Naive thymus-derived CD4-positive, alpha-beta T cell (primary cell): ENCODE measurements at regions of chr9 and their contacts with region 1.

Region 1: GRCh38 chr9:78035383-78035993 is 3.9 kb upstream of the GNAQ start:
- DNase-seq: peak in 7 of 9 donors; percentile 53 to 76 (median 72)
- ATAC-seq: peak; percentile 36
- H3K4me3 ChIP-seq: no peak overlapping the region
- H3K4me3 Mint-ChIP-seq: peak overlapping the region in 6 of 10 donors; percentile 3 to 41 (median 24)
- H3K27ac ChIP-seq: no peak overlapping the region
- H3K27ac Mint-ChIP-seq: peak overlapping the region in 7 of 9 donors; percentile 2 to 84 (median 36)
- H3K4me1 ChIP-seq: peaks cover 0 to 20% of the 10 kb centered on the region in 2 donors
- H3K4me1 Mint-ChIP-seq: peaks cover 19 to 35% (median 34%) of the 10 kb centered on the region in 7 donors
- H3K27me3 ChIP-seq: no peaks in the 10 kb centered on the region
- H3K27me3 Mint-ChIP-seq: peaks cover 0 to 4% (median 0%) of the 10 kb centered on the region in 5 donors

Region 2: DNA sequence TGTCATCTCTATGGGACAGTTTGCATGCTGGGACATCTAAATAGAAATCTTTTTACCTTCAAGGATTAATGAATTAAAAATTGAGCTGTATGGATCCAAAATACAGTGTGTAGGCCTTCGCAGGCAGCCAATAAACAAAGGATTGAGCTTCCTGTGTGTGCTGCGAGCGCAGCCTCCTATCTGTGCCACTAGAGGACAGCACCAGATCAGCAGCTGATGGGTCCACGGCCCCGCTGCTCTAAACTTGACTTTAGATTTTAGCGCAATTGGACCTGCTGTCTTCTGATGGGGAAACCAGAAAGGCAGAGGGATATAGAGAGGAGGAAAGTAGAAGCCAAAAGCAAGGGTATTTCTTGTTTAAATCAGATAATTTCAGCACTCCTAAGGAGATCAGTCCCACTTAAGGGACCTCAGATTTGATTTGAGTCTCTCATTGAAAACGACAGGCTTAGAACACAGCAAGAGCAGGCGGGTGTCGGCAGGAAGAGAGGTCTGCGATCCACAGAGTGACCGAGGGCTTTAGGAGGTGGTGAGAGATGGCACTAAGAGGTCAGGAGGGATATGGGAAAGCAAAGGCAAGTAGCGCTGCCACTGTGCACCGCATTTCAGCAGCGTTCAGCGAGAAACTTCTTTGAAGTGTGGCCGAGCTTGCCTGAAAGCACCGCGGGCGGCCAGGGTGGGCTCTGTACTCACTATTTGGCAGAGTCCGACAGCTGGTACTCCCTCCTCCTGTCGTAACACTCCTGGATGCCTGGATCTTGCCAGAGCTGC is 601.6 kb before region 1 on chr9:
- CTCF ChIA-PET with region 1: no interaction called
- POLR2A ChIA-PET with region 1: no interaction called
- intact Hi-C with region 1: loop called (anchors 1 kb)
- DNase-seq: peak; percentile 24 to 62 (median 46)
- ATAC-seq: peak; percentile 90
- H3K4me3 ChIP-seq: no peak overlapping the region
- H3K4me3 Mint-ChIP-seq: peak overlapping the region in 3 of 10 donors; percentile 9 to 70 (median 29)
- H3K27ac ChIP-seq: no peak overlapping the region
- H3K27ac Mint-ChIP-seq: no peak overlapping the region
- H3K4me1 ChIP-seq: no peaks in the 10 kb centered on the region
- H3K4me1 Mint-ChIP-seq: peaks cover 4 to 6% (median 4%) of the 10 kb centered on the region in 7 donors
- H3K27me3 ChIP-seq: no peaks in the 10 kb centered on the region
- H3K27me3 Mint-ChIP-seq: peaks cover 0 to 8% (median 0%) of the 10 kb centered on the region in 5 donors

Region 3: GRCh38 chr9:77751341-77752091 is 284.0 kb before region 1 on chr9:
- CTCF ChIA-PET with region 1: no interaction called
- POLR2A ChIA-PET with region 1: no interaction called
- intact Hi-C with region 1: loop called (anchors 1 to 5 kb)
- DNase-seq: peak in 6 of 9 donors; percentile 4 to 28 (median 22)
- ATAC-seq: peak; percentile 57
- H3K4me3 ChIP-seq: no peak overlapping the region
- H3K4me3 Mint-ChIP-seq: no peak overlapping the region
- H3K27ac ChIP-seq: no peak overlapping the region
- H3K27ac Mint-ChIP-seq: peak overlapping the region in 5 of 9 donors; percentile 4 to 86 (median 29)
- H3K4me1 ChIP-seq: no peaks in the 10 kb centered on the region
- H3K4me1 Mint-ChIP-seq: peaks cover 15 to 34% (median 28%) of the 10 kb centered on the region in 7 donors
- H3K27me3 ChIP-seq: no peaks in the 10 kb centered on the region
- H3K27me3 Mint-ChIP-seq: no peaks in the 10 kb centered on the region

Region 4: DNA sequence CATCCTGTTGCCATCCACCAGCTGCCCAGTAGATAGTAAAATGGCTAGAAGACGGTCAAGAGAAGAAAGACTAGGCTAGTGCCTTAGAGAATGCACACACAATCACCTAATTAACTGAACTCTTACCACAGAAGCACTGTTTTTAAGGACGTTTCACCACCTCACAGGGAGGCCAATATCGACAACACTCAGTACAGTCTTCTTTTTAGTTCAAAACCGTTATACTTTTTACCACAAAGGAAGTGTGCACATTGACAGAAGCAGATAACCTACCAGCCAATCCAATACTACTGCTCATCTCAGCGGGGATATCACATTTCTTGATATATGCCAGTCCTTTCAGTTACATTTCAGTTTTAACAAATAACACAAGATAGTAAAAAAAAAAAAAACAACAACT is 126.2 kb before region 1 on chr9:
- CTCF ChIA-PET with region 1: interaction called, 4 read pairs
- POLR2A ChIA-PET with region 1: no interaction called
- intact Hi-C with region 1: loop called in 1 of 2 experiments (anchors 2 kb)
- DNase-seq: peak in 7 of 9 donors; percentile 45 to 80 (median 63)
- ATAC-seq: peak; percentile 98
- H3K4me3 ChIP-seq: peak overlapping the region; percentile 27
- H3K4me3 Mint-ChIP-seq: peak overlapping the region; percentile 58 to 87 (median 78)
- H3K27ac ChIP-seq: peak overlapping the region; percentile 65
- H3K27ac Mint-ChIP-seq: peak overlapping the region; percentile 68 to 97 (median 92)
- H3K4me1 ChIP-seq: peaks cover 6 to 32% of the 10 kb centered on the region in 2 donors
- H3K4me1 Mint-ChIP-seq: peaks cover 45 to 70% (median 61%) of the 10 kb centered on the region in 7 donors
- H3K27me3 ChIP-seq: no peaks in the 10 kb centered on the region
- H3K27me3 Mint-ChIP-seq: no peaks in the 10 kb centered on the region

Region 5: DNA sequence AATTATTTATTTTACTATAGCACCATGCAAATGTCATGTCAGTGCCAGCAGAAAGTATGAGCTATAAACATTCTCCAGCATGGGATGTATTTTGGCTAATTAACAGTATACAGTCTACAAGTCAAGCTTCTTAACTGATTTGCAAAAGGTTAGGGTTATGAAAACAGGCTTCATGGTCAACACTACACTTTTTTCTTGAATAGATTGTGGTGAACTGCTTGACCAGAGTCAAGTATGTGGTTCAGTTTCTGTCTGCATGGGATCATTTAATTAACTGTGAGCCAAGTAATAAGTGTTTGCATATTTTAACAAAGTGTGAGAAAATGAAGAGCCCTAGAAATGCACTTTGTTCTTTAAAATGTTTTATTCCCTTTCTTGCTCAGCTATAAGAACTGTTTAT is 10.6 kb after region 1 on chr9:
- CTCF ChIA-PET with region 1: interaction called, 6 read pairs
- POLR2A ChIA-PET with region 1: interaction called, 3 read pairs
- intact Hi-C with region 1: loop called in 1 of 2 experiments (anchors 2 kb)
- DNase-seq: no peak
- ATAC-seq: no peak
- H3K4me3 ChIP-seq: no peak overlapping the region
- H3K4me3 Mint-ChIP-seq: no peak overlapping the region
- H3K27ac ChIP-seq: no peak overlapping the region
- H3K27ac Mint-ChIP-seq: no peak overlapping the region
- H3K4me1 ChIP-seq: no peaks in the 10 kb centered on the region
- H3K4me1 Mint-ChIP-seq: peaks cover 0 to 10% (median 0%) of the 10 kb centered on the region in 7 donors
- H3K27me3 ChIP-seq: no peaks in the 10 kb centered on the region
- H3K27me3 Mint-ChIP-seq: peaks cover 0 to 43% (median 0%) of the 10 kb centered on the region in 5 donors

Region 6: DNA sequence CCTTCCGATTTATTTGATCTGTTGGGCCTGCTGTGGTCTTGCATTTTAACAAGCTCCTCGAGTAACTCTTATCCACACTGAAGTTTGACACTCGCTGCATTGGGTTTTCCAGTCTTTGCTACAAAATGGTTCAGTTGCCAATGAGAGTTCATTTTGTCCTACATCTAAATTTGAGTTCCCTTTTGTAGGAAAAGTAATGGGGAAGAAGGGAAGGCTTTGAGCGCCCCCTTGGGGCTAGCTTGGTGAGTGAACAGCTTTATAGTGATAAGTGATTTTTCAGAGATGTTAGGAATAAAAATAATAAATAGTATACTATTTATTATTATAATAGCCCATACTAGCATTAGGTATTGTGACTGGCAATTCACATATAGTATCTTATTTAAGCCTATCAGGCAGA is 86.0 kb after region 1 on chr9:
- CTCF ChIA-PET with region 1: interaction called, 13 read pairs
- POLR2A ChIA-PET with region 1: interaction called, 5 read pairs
- intact Hi-C with region 1: loop called (anchors 1 to 2 kb)
- DNase-seq: peak in 7 of 9 donors; percentile 24 to 55 (median 37)
- ATAC-seq: peak; percentile 44
- H3K4me3 ChIP-seq: no peak overlapping the region
- H3K4me3 Mint-ChIP-seq: no peak overlapping the region
- H3K27ac ChIP-seq: no peak overlapping the region
- H3K27ac Mint-ChIP-seq: peak overlapping the region in 3 of 9 donors; percentile 44 to 94 (median 59)
- H3K4me1 ChIP-seq: peaks cover 17 to 32% of the 10 kb centered on the region in 2 donors
- H3K4me1 Mint-ChIP-seq: peaks cover 27 to 55% (median 47%) of the 10 kb centered on the region in 7 donors
- H3K27me3 ChIP-seq: no peaks in the 10 kb centered on the region
- H3K27me3 Mint-ChIP-seq: peaks cover 0 to 15% (median 0%) of the 10 kb centered on the region in 5 donors

Region 7: GRCh38 chr9:78296893-78297671 is 261.6 kb after region 1 on chr9 and contains the start of gene PSAT1:
- CTCF ChIA-PET with region 1: no interaction called
- POLR2A ChIA-PET with region 1: interaction called, 3 read pairs
- intact Hi-C with region 1: loop called (anchors 2 kb)
- DNase-seq: peak; percentile 69 to 91 (median 88)
- ATAC-seq: peak; percentile 99
- H3K4me3 ChIP-seq: peak within 1 kb of the TSS; percentile 86
- H3K4me3 Mint-ChIP-seq: peak within 1 kb of the TSS; percentile 86 to 95 (median 92)
- H3K27ac ChIP-seq: peak within 1 kb of the TSS; percentile 56
- H3K27ac Mint-ChIP-seq: peak within 1 kb of the TSS; percentile 60 to 95 (median 81)
- H3K4me1 ChIP-seq: peaks cover 4 to 8% of the 10 kb centered on the region in 2 donors
- H3K4me1 Mint-ChIP-seq: peaks cover 21 to 59% (median 44%) of the 10 kb centered on the region in 7 donors
- H3K27me3 ChIP-seq: no peaks in the 10 kb centered on the region
- H3K27me3 Mint-ChIP-seq: peaks cover 0 to 5% (median 0%) of the 10 kb centered on the region in 5 donors
- total RNA-seq, gene PSAT1: 1.6 to 65.2 (median 9.5) TPM

Region 8: GRCh38 chr9:78369639-78370219 is 334.2 kb after region 1 on chr9:
- CTCF ChIA-PET with region 1: no interaction called
- POLR2A ChIA-PET with region 1: no interaction called
- intact Hi-C with region 1: no loop called
- DNase-seq: peak in 8 of 9 donors; percentile 17 to 54 (median 40)
- ATAC-seq: peak; percentile 47
- H3K4me3 ChIP-seq: no peak overlapping the region
- H3K4me3 Mint-ChIP-seq: no peak overlapping the region
- H3K27ac ChIP-seq: no peak overlapping the region
- H3K27ac Mint-ChIP-seq: no peak overlapping the region
- H3K4me1 ChIP-seq: no peaks in the 10 kb centered on the region
- H3K4me1 Mint-ChIP-seq: peaks cover 0 to 3% (median 0%) of the 10 kb centered on the region in 7 donors
- H3K27me3 ChIP-seq: no peaks in the 10 kb centered on the region
- H3K27me3 Mint-ChIP-seq: peaks cover 27 to 37% (median 29%) of the 10 kb centered on the region in 5 donors